ENCODE measurements at regions of chr7 and their contacts with region 1.

Region 1: GRCh38 chr7:30740424-30741181 is 11.3 kb upstream of the INMT start:
- DNase-seq: peak; percentile 67
- H3K4me3 Mint-ChIP-seq: no peak overlapping the region
- H3K27ac Mint-ChIP-seq: no peak overlapping the region
- H3K4me1 Mint-ChIP-seq: no peaks in the 10 kb centered on the region
- H3K27me3 Mint-ChIP-seq: peaks cover 27% of the 10 kb centered on the region
- CTCF ChIP-seq: peak; percentile 99

Region 2: DNA sequence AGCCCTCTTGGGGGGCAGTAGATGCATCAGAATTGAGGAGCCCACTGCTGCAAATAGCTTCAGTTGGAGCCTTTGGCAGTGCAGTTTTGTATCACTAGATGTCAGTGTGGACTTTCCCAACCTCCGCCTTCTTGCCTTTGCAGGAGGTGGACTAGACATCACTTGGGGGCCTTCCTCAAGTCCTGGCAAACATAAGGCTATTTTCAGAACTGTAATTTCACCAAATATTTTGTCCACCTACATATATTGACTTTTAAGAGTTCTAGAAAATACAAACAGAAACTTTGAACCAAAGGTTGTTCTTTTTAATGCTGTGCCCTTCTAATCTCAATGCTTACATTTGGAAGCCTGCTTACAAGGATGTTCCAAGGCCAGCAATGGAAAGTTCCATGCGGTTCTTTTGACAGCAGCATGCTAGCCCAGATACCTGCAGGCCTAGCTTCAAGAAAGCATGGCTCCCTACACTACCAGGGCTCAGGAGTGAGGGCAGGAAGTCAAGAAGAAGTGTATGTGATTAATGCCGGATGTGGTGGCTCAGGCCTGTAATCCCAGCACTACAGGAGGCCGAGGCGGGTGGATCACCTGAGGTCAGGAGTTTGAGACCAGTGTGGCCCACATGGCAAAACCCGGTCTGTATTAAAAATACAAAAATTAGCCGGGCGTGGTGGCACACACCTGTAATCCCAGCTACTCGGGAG is 464.3 kb before region 1 on chr7:
- CTCF ChIA-PET with region 1: no interaction called
- POLR2A ChIA-PET with region 1: no interaction called
- intact Hi-C with region 1: loop called (anchors 1 kb)
- DNase-seq: peak; percentile 63
- H3K4me3 Mint-ChIP-seq: no peak overlapping the region
- H3K27ac Mint-ChIP-seq: no peak overlapping the region
- H3K4me1 Mint-ChIP-seq: peaks cover 6% of the 10 kb centered on the region
- H3K27me3 Mint-ChIP-seq: no peaks in the 10 kb centered on the region
- CTCF ChIP-seq: peak; percentile 76

Region 3: GRCh38 chr7:30564243-30564892 is 176.2 kb before region 1 on chr7:
- CTCF ChIA-PET with region 1: interaction called, 14 read pairs
- POLR2A ChIA-PET with region 1: no interaction called
- intact Hi-C with region 1: loop called (anchors 1 kb)
- DNase-seq: peak; percentile 91
- H3K4me3 Mint-ChIP-seq: no peak overlapping the region
- H3K27ac Mint-ChIP-seq: peak overlapping the region; percentile 64
- H3K4me1 Mint-ChIP-seq: peaks cover 9% of the 10 kb centered on the region
- H3K27me3 Mint-ChIP-seq: no peaks in the 10 kb centered on the region
- CTCF ChIP-seq: peak; percentile 95

Region 4: GRCh38 chr7:30630986-30631385 is 109.6 kb before region 1 on chr7:
- CTCF ChIA-PET with region 1: interaction called, 14 read pairs
- POLR2A ChIA-PET with region 1: no interaction called
- intact Hi-C with region 1: loop called (anchors 5 kb)
- DNase-seq: no peak
- H3K4me3 Mint-ChIP-seq: no peak overlapping the region
- H3K27ac Mint-ChIP-seq: no peak overlapping the region
- H3K4me1 Mint-ChIP-seq: no peaks in the 10 kb centered on the region
- H3K27me3 Mint-ChIP-seq: no peaks in the 10 kb centered on the region
- CTCF ChIP-seq: no peak

Region 5: DNA sequence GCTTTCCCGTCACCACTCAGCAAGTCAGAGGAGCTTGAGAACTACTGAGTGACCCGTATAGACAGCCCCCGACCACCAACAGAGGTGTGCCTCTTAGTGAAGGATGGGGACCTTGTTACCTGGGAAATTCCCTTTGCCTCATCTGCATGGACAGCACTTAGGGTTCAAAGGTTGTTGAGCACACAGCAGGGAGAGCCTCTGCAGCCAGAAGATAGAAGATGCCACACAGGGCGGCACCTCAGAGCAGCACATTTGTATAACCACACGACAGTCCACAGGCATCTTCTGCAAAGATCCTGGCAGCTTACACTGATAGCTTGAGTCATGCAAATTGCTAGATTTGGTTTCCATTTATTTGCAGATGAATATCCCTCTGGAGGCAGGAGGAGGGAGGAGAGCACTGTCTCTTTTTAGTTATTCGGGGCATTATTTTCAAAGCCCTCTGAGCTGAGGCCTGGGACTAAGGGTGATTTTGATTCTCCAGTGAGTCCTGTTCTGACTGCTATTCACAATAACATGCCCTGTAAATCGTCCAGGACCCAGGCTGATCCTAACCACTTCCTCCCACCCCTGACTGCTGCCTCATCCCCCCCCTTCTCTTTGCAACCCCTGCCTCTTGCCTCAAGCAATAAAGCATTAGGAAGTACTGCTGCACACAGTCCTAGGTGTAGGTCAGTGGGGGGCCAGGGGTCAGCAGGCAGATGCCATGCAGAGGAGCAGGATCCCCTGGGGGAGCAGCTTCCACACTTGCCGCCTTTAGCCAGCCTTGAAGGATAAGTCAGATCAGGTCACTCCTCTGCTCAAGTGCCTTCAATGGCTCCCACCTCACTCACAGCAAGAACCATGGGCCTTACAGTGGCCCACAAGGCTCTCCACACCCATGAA is 13.3 kb before region 1 on chr7:
- CTCF ChIA-PET with region 1: interaction called, 35 read pairs
- POLR2A ChIA-PET with region 1: no interaction called
- intact Hi-C with region 1: no loop called
- DNase-seq: no peak
- H3K4me3 Mint-ChIP-seq: no peak overlapping the region
- H3K27ac Mint-ChIP-seq: no peak overlapping the region
- H3K4me1 Mint-ChIP-seq: no peaks in the 10 kb centered on the region
- H3K27me3 Mint-ChIP-seq: peaks cover 79% of the 10 kb centered on the region
- CTCF ChIP-seq: no peak

Region 6: DNA sequence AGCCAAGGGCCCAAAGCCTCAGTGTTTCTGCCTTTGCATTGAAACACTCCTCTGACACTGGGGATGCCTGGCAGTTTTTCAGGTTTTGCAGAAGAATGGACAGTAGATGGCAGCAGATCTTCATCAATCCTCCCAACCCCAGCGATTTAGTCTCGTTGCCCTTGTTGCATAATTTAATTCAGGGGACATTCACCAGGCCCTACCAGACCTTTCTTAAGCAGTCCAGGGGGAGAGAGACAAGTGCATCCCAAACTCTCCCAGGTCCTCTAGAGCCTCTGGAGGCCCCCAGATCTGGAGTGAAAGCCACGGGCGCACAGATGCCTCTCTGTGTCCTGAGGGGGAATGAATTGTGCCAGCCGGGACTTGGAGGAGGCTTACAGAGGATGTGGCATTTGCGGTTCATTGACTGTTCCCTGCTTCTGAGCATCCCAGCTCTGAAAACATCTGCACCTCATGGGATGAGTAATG is 60.2 kb after region 1 on chr7:
- CTCF ChIA-PET with region 1: interaction called, 3 read pairs
- POLR2A ChIA-PET with region 1: no interaction called
- intact Hi-C with region 1: loop called (anchors 1 kb)
- DNase-seq: peak; percentile 80
- H3K4me3 Mint-ChIP-seq: no peak overlapping the region
- H3K27ac Mint-ChIP-seq: no peak overlapping the region
- H3K4me1 Mint-ChIP-seq: peaks cover 43% of the 10 kb centered on the region
- H3K27me3 Mint-ChIP-seq: no peaks in the 10 kb centered on the region
- CTCF ChIP-seq: peak; percentile 80